Head of caudate nucleus (tissue), 42 donors: ENCODE measurements at regions of chr2 and their contacts with region 1.

Region 1: DNA sequence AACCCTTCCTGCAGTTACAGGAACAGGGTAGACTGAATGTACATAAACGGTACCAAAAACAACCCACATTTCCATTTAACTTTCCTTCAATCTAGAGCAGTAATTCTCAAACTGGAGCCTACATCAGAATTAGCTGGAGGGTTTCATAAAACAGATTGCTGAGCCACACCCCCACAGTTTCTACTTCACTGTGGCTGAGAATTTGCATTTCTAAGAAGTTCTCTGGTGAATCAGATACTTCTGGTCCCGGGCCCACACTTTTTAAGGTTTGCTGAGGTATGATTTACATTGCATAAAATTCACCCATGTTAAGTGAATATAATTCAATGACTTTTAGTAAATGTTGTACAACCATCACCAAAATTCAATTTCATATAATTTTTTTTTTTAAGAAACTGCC is 113.7 kb downstream of the SRBD1 start:
- DNase-seq: peak in 34 of 42 donors; percentile 9 to 82 (median 40)

Region 2: DNA sequence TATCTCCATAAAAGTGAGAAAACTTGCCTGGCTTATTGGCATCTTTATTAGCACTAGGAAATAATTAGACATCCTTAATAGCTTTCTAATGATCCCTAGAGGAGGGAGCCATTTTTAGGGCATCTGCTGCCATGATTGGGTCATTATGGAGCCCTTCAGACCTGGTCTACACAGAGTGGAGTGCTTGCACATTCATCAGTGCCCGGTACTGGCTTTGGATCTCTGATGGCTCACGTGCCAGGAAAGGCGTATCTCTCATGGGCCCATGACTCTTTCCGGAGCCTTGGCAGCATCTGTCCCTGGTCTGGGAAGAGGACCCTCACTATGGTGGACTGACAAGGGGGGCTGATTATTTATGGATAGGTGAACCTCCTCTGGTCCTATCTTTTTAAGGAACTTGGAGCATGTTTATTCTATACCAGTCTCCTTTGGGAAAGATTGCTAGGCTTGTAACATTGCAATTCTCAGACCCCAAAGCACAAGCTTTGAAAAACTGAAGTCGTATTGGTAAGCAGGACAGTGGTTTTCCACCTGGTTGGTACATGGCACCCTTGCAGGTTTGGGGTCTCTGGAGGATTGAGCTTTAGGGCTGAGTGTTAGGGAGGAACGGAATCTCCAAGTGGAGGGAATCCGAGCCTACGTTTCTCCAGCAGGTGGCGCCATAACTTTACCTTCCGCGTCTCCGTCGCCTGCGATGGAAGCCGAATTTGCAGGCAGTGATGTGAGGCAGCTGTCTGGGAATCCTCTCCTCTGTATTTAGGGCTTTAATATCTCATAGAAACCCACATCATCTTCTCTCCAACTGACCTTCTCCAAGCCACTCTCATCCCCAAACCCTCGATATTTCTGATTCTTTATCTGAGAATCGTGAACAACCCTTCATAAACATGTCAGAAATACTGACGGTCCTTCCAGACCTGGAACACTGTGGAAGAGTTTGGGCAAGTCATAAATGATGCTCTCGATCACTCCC is 515.9 kb before region 1 on chr2:
- intact Hi-C with region 1: loop called (anchors 5 kb)
- DNase-seq: peak; percentile 58 to 93 (median 84)

Region 3: DNA sequence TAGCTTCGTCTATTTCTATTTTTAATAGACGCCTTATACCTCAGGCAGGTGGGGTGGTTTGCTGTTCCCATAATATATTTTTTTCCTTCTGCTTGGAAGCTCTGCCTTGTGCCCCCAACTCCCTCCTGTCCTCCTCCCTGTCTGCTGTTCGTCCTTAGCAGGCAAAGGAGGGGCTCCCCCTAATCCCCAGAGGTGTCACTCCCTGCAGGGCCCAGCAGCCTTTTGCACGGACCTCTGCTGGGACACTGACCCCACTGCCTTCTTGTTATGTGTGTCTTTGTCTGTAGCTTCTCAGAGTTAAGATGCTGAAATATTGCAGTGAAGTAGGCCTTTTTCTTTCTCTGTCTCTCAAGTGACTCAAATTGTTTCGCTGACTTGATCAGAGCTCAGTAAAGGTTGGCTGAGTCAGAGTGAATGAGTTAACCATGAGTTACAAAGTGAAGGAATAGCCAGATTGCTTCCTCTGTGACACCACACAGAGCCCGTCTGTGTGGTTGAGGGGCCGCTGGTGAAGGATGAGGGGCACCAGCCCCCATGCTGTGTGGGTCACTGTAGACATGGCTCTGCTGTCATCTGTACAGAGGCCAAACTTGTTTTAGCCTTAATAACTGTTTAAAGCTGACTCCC is 201.8 kb after region 1 on chr2:
- intact Hi-C with region 1: no loop called
- DNase-seq: no peak